Dorsolateral prefrontal cortex (tissue), 120 donors: ENCODE measurements at regions of chr13 and their contacts with region 1.

Region 1: GRCh38 chr13:19882231-19882630 is 18.8 kb upstream of the ZMYM5 start:
- DNase-seq: no peak
- H3K4me3 ChIP-seq: no peak overlapping the region
- H3K27ac ChIP-seq: no peak overlapping the region
- H3K27me3 ChIP-seq: no peaks in the 10 kb centered on the region
- CTCF ChIP-seq: no peak

Region 2: GRCh38 chr13:19952850-19953249 is 70.6 kb after region 1 on chr13:
- intact Hi-C with region 1: loop called in 1 of 2 experiments (anchors 5 kb)
- DNase-seq: no peak
- H3K4me3 ChIP-seq: no peak overlapping the region
- H3K27ac ChIP-seq: no peak overlapping the region
- H3K27me3 ChIP-seq: no peaks in the 10 kb centered on the region
- CTCF ChIP-seq: no peak